B cell (primary cell): ENCODE measurements at regions of chr1 and their contacts with region 1.

Region 1: GRCh38 chr1:172398970-172399755 is 21.3 kb upstream of the C1orf105 start:
- DNase-seq: peak; percentile 74
- ATAC-seq: peak; percentile 50
- H3K4me3 ChIP-seq: peak overlapping the region in 3 of 5 experiments; percentile 33 to 41 (median 36)
- H3K4me3 Mint-ChIP-seq: peak overlapping the region; percentile 78
- H3K27ac ChIP-seq: peak overlapping the region; percentile 47 to 71
- H3K27ac Mint-ChIP-seq: peak overlapping the region; percentile 94
- H3K4me1 ChIP-seq: peaks cover 43 to 48% of the 10 kb centered on the region in 2 donors
- H3K4me1 Mint-ChIP-seq: peaks cover 56% of the 10 kb centered on the region
- H3K27me3 ChIP-seq: no peaks in the 10 kb centered on the region
- H3K27me3 Mint-ChIP-seq: no peaks in the 10 kb centered on the region
- CTCF ChIP-seq: peak; percentile 92

Region 2: DNA sequence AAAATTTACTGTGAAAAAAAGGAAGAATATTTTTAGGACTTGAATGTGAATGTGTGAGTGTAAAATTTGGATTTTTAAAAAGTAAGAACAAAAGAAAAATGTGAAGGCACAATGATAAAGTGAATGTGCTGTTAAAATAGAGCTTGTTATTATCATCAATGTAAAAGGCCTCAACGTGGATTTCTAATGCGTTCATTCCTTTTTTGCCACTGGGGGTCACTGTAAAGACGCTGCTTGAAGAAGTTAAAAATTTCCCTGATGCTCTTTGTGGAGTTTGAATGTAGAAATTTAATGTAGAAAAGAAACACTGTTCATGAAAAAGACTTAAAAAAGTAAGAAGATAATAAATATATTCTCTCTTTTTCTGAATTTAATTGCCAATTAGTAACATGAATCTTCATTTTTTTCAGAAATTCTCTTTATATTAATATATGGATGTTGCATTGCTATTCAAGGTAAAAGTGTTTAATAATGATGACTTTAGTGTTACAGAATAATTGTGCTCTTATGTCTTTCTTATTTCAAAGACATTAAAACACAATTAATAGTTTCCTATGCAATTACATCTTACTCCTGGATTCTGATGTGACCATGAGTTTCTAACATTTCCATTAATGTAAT is 396.3 kb before region 1 on chr1:
- CTCF ChIA-PET with region 1: interaction called, 120 read pairs
- POLR2A ChIA-PET with region 1: no interaction called
- intact Hi-C with region 1: loop called (anchors 1 kb)
- DNase-seq: peak; percentile 66
- ATAC-seq: peak; percentile 41
- H3K4me3 ChIP-seq: no peak overlapping the region
- H3K4me3 Mint-ChIP-seq: no peak overlapping the region
- H3K27ac ChIP-seq: no peak overlapping the region
- H3K27ac Mint-ChIP-seq: no peak overlapping the region
- H3K4me1 ChIP-seq: no peaks in the 10 kb centered on the region
- H3K4me1 Mint-ChIP-seq: no peaks in the 10 kb centered on the region
- H3K27me3 ChIP-seq: no peaks in the 10 kb centered on the region
- H3K27me3 Mint-ChIP-seq: no peaks in the 10 kb centered on the region
- CTCF ChIP-seq: peak; percentile 81

Region 3: DNA sequence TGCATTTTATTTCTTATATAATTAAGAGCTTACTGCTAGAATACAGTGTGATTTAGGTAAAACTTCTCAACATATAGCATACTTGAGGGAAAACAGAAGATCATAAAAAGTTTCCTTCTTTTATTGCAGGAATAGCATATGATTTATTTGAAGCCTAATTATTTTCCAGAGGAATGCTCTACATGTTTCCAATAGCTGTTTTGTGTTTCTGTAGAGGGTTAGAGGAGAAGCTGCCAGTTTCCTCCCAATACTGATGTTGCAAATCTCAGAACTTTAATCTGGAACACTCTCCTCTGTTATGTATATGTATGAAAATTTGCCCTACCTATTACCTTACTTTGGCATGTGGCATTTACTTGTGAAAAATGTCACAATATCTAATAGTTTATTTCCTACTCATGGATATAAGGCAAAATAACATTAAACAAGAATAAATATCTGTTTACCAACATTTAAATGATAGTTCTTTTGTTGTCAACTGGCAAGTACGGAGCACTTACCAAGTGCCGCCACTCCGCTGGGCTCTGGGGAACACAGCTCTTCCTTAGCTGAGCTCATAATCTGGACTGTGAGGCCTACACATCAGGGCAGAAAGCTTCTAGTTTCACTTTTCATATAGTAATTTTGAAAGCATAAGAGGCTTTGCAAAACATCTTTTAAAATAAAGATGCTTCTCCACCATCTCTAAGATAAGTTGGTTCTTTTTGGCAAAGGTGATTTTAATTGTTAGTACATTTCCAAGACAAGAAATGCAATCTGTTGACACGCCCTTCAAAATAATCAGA is 218.5 kb before region 1 on chr1:
- CTCF ChIA-PET with region 1: interaction called, 28 read pairs
- POLR2A ChIA-PET with region 1: interaction called, 3 read pairs
- intact Hi-C with region 1: loop called (anchors 1 kb)
- DNase-seq: peak; percentile 72
- ATAC-seq: peak; percentile 74
- H3K4me3 ChIP-seq: peak overlapping the region in 3 of 5 experiments; percentile 32 to 50 (median 38)
- H3K4me3 Mint-ChIP-seq: peak overlapping the region; percentile 86
- H3K27ac ChIP-seq: peak overlapping the region; percentile 77 to 93
- H3K27ac Mint-ChIP-seq: peak overlapping the region; percentile 97
- H3K4me1 ChIP-seq: peaks cover 52 to 56% of the 10 kb centered on the region in 2 donors
- H3K4me1 Mint-ChIP-seq: peaks cover 46% of the 10 kb centered on the region
- H3K27me3 ChIP-seq: no peaks in the 10 kb centered on the region
- H3K27me3 Mint-ChIP-seq: no peaks in the 10 kb centered on the region
- CTCF ChIP-seq: no peak

Region 4: DNA sequence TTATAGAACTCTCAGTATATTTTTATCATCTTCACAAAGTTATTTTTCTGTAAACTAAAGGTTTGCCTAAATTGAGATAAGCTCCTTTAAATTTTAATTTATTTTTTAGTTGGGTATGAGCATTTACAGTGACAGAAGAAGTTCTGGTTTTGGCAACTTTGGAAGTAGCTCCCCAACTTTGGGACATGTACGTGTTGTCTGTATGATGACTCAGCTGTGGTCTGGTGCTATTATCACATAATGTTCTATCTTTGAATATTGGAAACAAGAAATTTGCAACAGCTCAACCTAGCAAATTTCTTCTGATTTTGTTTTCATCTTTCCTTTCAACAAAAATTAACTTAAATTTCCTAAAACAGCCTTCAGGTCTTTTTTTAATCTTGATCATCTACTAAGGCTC is 25.3 kb before region 1 on chr1:
- CTCF ChIA-PET with region 1: interaction called, 23 read pairs
- POLR2A ChIA-PET with region 1: interaction called, 3 read pairs
- intact Hi-C with region 1: no loop called
- DNase-seq: no peak
- ATAC-seq: no peak
- H3K4me3 ChIP-seq: no peak overlapping the region
- H3K4me3 Mint-ChIP-seq: no peak overlapping the region
- H3K27ac ChIP-seq: peak overlapping the region in 1 of 2 donors; percentile 3
- H3K27ac Mint-ChIP-seq: peak overlapping the region; percentile 38
- H3K4me1 ChIP-seq: peaks cover 2 to 12% of the 10 kb centered on the region in 2 donors
- H3K4me1 Mint-ChIP-seq: peaks cover 24% of the 10 kb centered on the region
- H3K27me3 ChIP-seq: no peaks in the 10 kb centered on the region
- H3K27me3 Mint-ChIP-seq: no peaks in the 10 kb centered on the region
- CTCF ChIP-seq: no peak

Region 5: DNA sequence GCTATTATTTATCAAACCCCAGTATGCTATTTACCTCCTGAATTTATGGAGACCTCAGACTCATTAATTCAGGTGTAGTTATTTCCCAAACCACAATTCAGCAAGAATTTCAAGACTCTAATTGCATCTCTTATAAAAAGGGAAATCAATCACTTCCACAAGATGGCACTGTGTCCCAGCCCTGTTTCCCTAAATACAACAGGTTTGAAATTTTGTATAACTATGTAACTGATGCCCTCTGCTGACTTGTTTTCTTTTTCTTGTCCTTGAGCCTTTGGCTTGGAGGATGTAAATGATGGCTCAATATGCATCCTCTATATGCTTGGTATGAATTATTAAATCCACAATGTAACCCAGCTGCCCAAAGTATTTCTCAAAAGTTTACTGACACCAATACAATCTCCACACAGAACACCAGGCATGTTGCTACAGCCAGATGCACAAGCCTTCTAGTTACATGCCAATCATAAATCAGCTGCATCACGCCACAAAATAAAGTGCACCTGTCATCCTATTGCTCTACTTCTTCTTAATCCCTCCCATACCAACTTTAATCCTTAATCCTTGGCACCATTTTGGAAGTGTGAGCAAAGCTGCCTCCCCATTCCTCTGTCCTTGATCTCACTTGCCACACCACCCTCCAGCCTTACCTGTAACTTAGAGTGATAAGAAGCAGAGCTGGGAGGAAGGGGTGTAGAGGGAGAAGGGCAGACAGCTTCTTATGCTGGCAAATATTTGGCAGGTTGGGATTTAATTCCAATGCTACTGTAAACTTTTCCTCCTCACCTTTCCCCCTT is 30.4 kb after region 1 on chr1:
- CTCF ChIA-PET with region 1: interaction called, 21 read pairs
- POLR2A ChIA-PET with region 1: no interaction called
- intact Hi-C with region 1: no loop called
- DNase-seq: peak; percentile 71
- ATAC-seq: peak; percentile 76
- H3K4me3 ChIP-seq: no peak overlapping the region
- H3K4me3 Mint-ChIP-seq: no peak overlapping the region
- H3K27ac ChIP-seq: no peak overlapping the region
- H3K27ac Mint-ChIP-seq: no peak overlapping the region
- H3K4me1 ChIP-seq: peaks cover 10 to 12% of the 10 kb centered on the region in 2 donors
- H3K4me1 Mint-ChIP-seq: peaks cover 14% of the 10 kb centered on the region
- H3K27me3 ChIP-seq: no peaks in the 10 kb centered on the region
- H3K27me3 Mint-ChIP-seq: no peaks in the 10 kb centered on the region
- CTCF ChIP-seq: peak; percentile 71

Region 6: DNA sequence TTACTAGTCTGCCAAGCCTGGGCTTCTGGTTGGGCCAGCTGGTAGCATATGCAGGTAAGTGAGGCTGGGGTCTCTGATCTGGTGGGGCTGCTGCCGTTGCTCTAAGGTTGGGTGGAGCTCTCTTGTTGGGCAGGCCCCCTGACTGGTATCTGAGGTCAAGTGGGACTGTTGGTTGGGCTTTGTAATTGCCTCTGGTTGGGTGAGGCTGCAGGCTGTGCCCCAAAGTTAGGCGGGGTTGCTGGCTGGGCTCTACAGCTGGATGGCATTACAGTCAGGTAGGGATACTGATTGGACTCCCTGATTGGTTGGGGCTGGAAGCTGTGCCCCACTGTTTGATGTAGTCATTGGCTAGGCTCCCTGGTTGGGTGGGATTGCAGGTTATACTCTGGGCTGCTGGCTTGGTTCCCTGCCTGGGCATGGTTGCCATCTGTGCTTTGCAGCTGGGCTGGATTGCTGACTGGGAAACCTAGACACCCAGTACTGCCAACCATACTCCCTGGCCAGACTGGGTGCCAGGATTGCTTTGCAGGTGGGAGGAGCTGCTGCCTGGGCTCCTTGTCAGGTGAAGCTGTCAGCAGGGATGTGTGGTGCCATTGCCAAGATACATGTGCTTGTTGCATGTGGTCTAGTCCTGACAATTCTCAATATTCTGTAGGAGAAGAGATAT is 1890.6 kb after region 1 on chr1:
- CTCF ChIA-PET with region 1: no interaction called
- POLR2A ChIA-PET with region 1: no interaction called
- intact Hi-C with region 1: no loop called
- DNase-seq: no peak
- ATAC-seq: no peak
- H3K4me3 ChIP-seq: no peak overlapping the region
- H3K4me3 Mint-ChIP-seq: no peak overlapping the region
- H3K27ac ChIP-seq: no peak overlapping the region
- H3K27ac Mint-ChIP-seq: no peak overlapping the region
- H3K4me1 ChIP-seq: no peaks in the 10 kb centered on the region
- H3K4me1 Mint-ChIP-seq: no peaks in the 10 kb centered on the region
- H3K27me3 ChIP-seq: no peaks in the 10 kb centered on the region
- H3K27me3 Mint-ChIP-seq: no peaks in the 10 kb centered on the region
- CTCF ChIP-seq: no peak